Adrenal gland (tissue), 19 donors: ENCODE measurements at regions of chr5 and their contacts with region 1.

Region 1: GRCh38 chr5:138132543-138132942 is 6.7 kb downstream of the NME5 start:
- DNase-seq: no peak
- H3K4me3 ChIP-seq: peak overlapping the region in 1 of 4 donors; percentile 41
- H3K27ac ChIP-seq: no peak overlapping the region
- H3K4me1 ChIP-seq: no peaks in the 10 kb centered on the region
- H3K27me3 ChIP-seq: no peaks in the 10 kb centered on the region
- CTCF ChIP-seq: no peak
- POLR2A ChIP-seq: no peak

Region 2: GRCh38 chr5:138011991-138012390 is 120.6 kb before region 1 on chr5:
- intact Hi-C with region 1: no loop called
- DNase-seq: no peak
- H3K4me3 ChIP-seq: no peak overlapping the region
- H3K27ac ChIP-seq: no peak overlapping the region
- H3K4me1 ChIP-seq: peaks cover 0 to 9% of the 10 kb centered on the region in 2 donors
- H3K27me3 ChIP-seq: no peaks in the 10 kb centered on the region
- CTCF ChIP-seq: no peak
- POLR2A ChIP-seq: no peak

Region 3: DNA sequence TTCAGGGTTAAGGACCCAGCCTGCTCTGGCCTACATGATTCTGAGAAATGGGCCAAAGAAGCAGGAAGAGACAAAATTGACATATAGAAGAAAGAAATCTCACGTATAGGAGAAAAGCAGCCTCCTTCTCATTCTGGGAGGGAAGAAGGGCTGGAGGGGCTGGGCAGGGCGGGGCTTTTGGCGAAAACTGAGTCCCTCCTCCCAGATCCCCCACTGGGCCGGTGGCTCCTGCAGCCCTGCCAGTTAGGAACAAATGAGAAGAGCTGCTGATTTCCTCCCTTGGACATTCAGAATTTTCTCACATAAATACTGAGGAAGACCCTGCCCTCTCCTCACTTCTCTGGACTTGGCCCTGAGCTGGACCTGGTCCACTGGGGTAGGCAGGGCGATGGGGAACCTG is 48.8 kb before region 1 on chr5 and contains the start of gene WNT8A:
- intact Hi-C with region 1: loop called (anchors 5 kb)
- DNase-seq: no peak
- H3K4me3 ChIP-seq: no peak within 1 kb of the TSS
- H3K27ac ChIP-seq: no peak within 1 kb of the TSS
- H3K4me1 ChIP-seq: no peaks in the 10 kb centered on the region
- H3K27me3 ChIP-seq: no peaks in the 10 kb centered on the region
- CTCF ChIP-seq: no peak
- POLR2A ChIP-seq: no peak
- total RNA-seq, gene WNT8A: not detected

Region 4: DNA sequence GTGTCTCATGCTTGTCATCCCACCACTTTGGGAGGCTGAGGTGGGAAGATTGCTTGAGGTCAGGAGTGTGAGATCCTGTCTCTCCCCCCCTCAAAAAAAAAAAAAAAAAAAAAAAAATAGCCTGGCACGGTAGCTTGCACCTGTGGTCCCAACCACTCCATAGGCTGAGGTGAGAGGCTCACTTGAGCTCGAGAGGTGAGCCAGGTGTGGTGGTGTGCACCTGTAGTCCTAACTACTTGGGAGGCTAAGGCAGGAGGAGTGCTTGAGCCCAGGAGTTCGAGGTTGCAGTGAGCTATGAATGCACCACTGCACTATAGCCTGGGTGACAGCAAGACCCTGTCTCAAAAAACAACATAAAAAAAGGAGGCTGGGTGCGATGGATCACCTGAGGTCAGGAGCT is 420.2 kb after region 1 on chr5:
- intact Hi-C with region 1: no loop called
- DNase-seq: no peak
- H3K4me3 ChIP-seq: no peak overlapping the region
- H3K27ac ChIP-seq: no peak overlapping the region
- H3K4me1 ChIP-seq: peaks cover 0 to 10% of the 10 kb centered on the region in 2 donors
- H3K27me3 ChIP-seq: no peaks in the 10 kb centered on the region
- CTCF ChIP-seq: no peak
- POLR2A ChIP-seq: no peak